Left colon (tissue), 2 donors: ENCODE measurements at regions of chr10 and their contacts with region 1.

Region 1: GRCh38 chr10:11986593-11987216 is 55.9 kb downstream of the UPF2 start:
- DNase-seq: peak; percentile 53 to 87
- ATAC-seq: peak; percentile 82

Region 2: GRCh38 chr10:11782793-11783557 is 203.7 kb before region 1 on chr10:
- intact Hi-C with region 1: loop called in 1 of 2 experiments (anchors 5 kb)
- DNase-seq: no peak
- ATAC-seq: peak; percentile 56

Region 3: GRCh38 chr10:11793762-11794479 is 192.8 kb before region 1 on chr10:
- intact Hi-C with region 1: loop called in 1 of 2 experiments (anchors 5 kb)
- DNase-seq: no peak
- ATAC-seq: no peak

Region 4: GRCh38 chr10:12195603-12196506 is 209.2 kb after region 1 on chr10 and contains the starts of genes CDC123 and NUDT5:
- intact Hi-C with region 1: no loop called
- DNase-seq: peak; percentile 89 to 91
- ATAC-seq: peak; percentile 96
- total RNA-seq, gene CDC123: 44.4 to 58.8 TPM
- total RNA-seq, gene NUDT5: 33.9 to 45.3 TPM